Kidney (tissue), 22 donors: ENCODE measurements at regions of chr19 and their contacts with region 1.

Region 1: GRCh38 chr19:11035441-11036377 is 53.6 kb upstream of the LDLR start:
- DNase-seq: peak; percentile 83 to 95 (median 85)
- H3K4me3 ChIP-seq: no peak overlapping the region
- H3K27ac ChIP-seq: no peak overlapping the region
- H3K4me1 ChIP-seq: no peaks in the 10 kb centered on the region
- H3K27me3 ChIP-seq: no peaks in the 10 kb centered on the region
- CTCF ChIP-seq: peak; percentile 90

Region 2: DNA sequence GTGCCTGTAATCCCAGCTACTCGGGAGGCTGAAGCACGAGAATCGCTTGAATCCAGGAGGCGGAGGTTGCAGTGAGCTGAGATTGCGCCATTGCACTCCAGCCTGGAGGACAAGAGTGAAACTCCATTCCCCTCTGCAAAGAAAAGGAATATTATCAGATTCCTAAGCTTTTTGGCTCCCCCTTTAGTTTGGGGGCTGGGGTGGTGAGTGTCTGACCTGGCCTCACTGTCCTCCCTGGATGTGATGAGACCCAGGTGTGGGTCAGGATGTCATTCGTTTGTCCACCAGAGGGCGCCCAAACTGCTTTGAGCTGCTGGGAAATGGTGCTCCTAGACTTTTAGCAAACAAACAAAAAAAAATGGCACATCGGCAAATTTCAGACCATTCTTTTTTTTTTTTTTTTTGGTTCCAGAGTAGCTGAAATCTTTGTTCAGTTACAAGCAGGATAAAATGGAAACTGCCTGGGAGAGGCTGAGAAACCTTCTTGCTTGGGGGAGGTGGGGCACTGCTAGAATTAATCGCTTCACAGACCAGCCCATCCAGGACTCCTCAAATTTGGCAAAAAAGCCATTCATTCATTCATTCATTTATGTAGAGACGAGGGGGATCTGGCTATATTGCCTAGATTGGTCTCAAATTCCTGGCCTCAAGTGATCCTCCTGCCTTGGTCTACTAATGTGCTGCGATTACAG is 90.4 kb after region 1 on chr19:
- intact Hi-C with region 1: loop called (anchors 10 kb)
- DNase-seq: peak; percentile 79 to 92 (median 85)
- H3K4me3 ChIP-seq: no peak overlapping the region
- H3K27ac ChIP-seq: no peak overlapping the region
- H3K4me1 ChIP-seq: peaks cover 0 to 6% (median 0%) of the 10 kb centered on the region in 3 donors
- H3K27me3 ChIP-seq: no peaks in the 10 kb centered on the region
- CTCF ChIP-seq: peak; percentile 85

Region 3: DNA sequence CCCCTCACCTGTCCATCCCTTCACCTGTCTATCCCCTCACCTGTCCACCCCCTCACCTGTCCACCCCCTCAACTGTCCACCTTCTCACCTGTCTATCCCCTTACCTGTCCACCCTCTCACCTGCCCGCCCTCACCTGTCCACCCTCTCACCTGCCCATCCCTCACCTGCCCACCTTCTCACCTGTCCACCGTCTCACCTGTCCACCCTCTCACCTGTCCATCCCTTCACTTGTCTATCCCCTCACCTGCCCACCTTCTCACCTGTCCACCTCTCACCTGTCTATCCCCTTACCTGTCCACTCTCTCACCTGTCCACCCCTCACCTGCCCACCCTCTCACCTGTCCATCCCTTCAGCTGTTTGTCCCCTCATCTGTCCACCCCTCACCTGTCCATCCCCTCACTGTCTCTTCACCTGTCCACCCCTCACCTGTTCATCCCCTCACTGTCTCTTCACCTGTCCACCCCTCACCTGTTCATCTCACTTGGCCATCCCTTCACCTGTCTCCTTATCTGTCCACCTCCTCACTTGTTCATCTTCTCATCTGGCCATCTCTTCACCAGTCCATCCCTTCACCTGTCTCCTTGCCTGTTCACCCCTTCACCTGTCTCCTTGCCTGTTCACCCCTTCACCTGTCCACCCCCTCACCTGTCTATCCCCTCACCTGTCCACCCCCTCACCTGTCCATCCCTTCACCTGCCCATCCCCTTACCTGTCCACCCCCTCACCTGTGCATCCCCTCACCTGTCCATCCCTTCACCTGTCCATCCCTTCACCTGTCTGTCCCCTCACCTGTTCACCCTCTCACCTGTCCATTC is 174.3 kb after region 1 on chr19:
- intact Hi-C with region 1: loop called (anchors 10 kb)
- DNase-seq: no peak
- H3K4me3 ChIP-seq: no peak overlapping the region
- H3K27ac ChIP-seq: no peak overlapping the region
- H3K4me1 ChIP-seq: peaks cover 0 to under 1% (median 0%) of the 10 kb centered on the region in 3 donors
- H3K27me3 ChIP-seq: no peaks in the 10 kb centered on the region
- CTCF ChIP-seq: no peak

Region 4: GRCh38 chr19:11482384-11483050 is 446.8 kb after region 1 on chr19:
- intact Hi-C with region 1: loop called (anchors 10 kb)
- DNase-seq: peak; percentile 74 to 95 (median 89)
- H3K4me3 ChIP-seq: no peak overlapping the region
- H3K27ac ChIP-seq: no peak overlapping the region
- H3K4me1 ChIP-seq: peaks cover 0 to 6% (median 0%) of the 10 kb centered on the region in 3 donors
- H3K27me3 ChIP-seq: peaks cover 11% of the 10 kb centered on the region
- CTCF ChIP-seq: peak; percentile 78